ENCODE measurements at regions of chr1 and their contacts with region 1.

Region 1: GRCh38 chr1:40508375-40509341 is at the start of gene EXO5:
- DNase-seq: peak; percentile 88
- H3K4me3 ChIP-seq: peak within 1 kb of the TSS; percentile 43 to 83 (median 66)
- H3K27ac ChIP-seq: peak within 1 kb of the TSS; percentile 72 to 83 (median 80)
- H3K4me1 ChIP-seq: peaks cover 0 to 16% (median 13%) of the 10 kb centered on the region in 4 donors
- H3K27me3 ChIP-seq: no peaks in the 10 kb centered on the region
- CTCF ChIP-seq: no peak
- EP300 ChIP-seq: no peak
- POLR2A ChIP-seq: peak in 1 of 2 donors; percentile 7
- total RNA-seq, gene EXO5: 5.4 to 8.6 (median 7.7) TPM

Region 2: DNA sequence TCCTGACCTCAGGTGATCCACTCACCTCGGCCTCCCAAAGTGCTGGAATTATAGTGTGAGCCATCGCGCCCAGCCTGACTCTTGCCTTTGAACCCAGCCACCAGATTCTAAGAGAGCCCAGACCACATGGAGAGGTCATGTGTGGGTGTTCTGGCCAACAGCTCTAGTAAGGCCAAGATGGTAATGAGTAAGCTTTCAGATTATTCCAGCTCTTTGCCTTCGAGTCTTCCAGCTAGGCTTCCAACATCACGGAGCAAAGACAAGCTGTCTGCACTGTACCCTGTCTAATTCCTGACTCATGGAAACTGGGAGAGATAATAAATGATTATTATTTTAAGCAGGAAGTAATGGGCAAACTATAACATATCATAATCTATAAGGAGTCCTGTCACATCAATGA is 73.2 kb before region 1 on chr1:
- intact Hi-C with region 1: no loop called
- DNase-seq: no peak
- H3K4me3 ChIP-seq: no peak overlapping the region
- H3K27ac ChIP-seq: no peak overlapping the region
- H3K4me1 ChIP-seq: no peaks in the 10 kb centered on the region
- H3K27me3 ChIP-seq: no peaks in the 10 kb centered on the region
- CTCF ChIP-seq: no peak
- EP300 ChIP-seq: no peak
- POLR2A ChIP-seq: no peak

Region 3: DNA sequence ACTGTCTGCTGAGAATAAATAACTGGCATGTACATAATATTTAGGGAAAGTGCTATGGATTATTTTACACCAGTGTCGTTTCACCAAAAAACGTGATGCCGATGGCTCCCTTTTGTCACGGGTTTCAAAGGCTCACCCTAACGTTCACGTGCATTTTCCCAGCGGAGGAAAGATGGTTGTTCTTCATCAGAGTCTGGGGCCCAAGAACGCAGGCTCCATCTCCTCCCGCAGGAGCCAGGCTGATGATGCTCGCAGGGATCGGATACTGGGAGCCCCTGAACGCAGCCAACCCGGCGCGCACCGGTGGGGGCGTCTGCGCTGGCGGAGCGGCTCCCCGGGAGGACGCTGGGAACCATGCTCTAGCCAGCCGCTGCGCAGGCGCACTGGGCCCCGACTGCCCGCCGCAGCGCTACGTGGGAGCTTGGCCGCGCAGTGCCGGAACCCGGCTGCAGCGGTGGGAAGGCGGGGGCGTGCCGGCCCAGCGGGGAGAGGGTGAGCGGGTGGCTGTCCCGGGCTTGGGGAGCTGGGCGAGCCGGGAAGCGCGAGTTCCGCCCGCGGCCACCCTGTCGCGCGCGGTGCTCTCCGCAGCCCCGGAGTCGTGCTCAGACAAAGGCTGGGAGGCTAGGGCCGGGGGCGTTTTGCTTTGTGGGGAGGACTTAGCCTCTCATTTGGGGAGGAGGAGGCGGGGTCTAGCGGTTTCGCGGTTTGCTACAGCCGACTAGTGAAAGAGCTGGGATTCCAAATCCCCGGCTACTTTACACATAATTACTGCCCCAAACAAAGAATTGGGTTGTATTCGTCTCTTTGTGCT is 58.8 kb before region 1 on chr1 and contains the start of gene ZFP69B:
- intact Hi-C with region 1: loop called (anchors 2 kb)
- DNase-seq: peak; percentile 94
- H3K4me3 ChIP-seq: peak within 1 kb of the TSS; percentile 60 to 81 (median 68)
- H3K27ac ChIP-seq: peak within 1 kb of the TSS; percentile 80 to 91 (median 82)
- H3K4me1 ChIP-seq: peaks cover 0 to 10% (median 8%) of the 10 kb centered on the region in 4 donors
- H3K27me3 ChIP-seq: no peaks in the 10 kb centered on the region
- CTCF ChIP-seq: peak in 1 of 4 experiments; percentile 14
- EP300 ChIP-seq: no peak
- POLR2A ChIP-seq: no peak
- total RNA-seq, gene ZFP69B: 0.14 to 0.99 (median 0.63) TPM

Region 4: GRCh38 chr1:42176902-42177519 is 1668.4 kb after region 1 on chr1:
- intact Hi-C with region 1: no loop called
- DNase-seq: no peak
- H3K4me3 ChIP-seq: no peak overlapping the region
- H3K27ac ChIP-seq: no peak overlapping the region
- H3K4me1 ChIP-seq: peaks cover 0 to 44% (median 23%) of the 10 kb centered on the region in 4 donors
- H3K27me3 ChIP-seq: no peaks in the 10 kb centered on the region
- CTCF ChIP-seq: peak in 2 of 4 experiments; percentile 57 to 59
- EP300 ChIP-seq: no peak
- POLR2A ChIP-seq: no peak